Activated T-helper 1 cell treated with anti-CD3 and anti-CD28 coated beads, Interleukin-12 subunit alpha, Interleukin-12 subunit beta, Interleukin-2, Interleukin-4 antibody, amounts not matched to agents 30 ng/mL and 10 ng/mL and 1 ng/mL, durations not matched to agents 14 hours and 24 hours and 36 hours (primary cell): ENCODE measurements at regions of chr2 and their contacts with region 1.

Region 1: DNA sequence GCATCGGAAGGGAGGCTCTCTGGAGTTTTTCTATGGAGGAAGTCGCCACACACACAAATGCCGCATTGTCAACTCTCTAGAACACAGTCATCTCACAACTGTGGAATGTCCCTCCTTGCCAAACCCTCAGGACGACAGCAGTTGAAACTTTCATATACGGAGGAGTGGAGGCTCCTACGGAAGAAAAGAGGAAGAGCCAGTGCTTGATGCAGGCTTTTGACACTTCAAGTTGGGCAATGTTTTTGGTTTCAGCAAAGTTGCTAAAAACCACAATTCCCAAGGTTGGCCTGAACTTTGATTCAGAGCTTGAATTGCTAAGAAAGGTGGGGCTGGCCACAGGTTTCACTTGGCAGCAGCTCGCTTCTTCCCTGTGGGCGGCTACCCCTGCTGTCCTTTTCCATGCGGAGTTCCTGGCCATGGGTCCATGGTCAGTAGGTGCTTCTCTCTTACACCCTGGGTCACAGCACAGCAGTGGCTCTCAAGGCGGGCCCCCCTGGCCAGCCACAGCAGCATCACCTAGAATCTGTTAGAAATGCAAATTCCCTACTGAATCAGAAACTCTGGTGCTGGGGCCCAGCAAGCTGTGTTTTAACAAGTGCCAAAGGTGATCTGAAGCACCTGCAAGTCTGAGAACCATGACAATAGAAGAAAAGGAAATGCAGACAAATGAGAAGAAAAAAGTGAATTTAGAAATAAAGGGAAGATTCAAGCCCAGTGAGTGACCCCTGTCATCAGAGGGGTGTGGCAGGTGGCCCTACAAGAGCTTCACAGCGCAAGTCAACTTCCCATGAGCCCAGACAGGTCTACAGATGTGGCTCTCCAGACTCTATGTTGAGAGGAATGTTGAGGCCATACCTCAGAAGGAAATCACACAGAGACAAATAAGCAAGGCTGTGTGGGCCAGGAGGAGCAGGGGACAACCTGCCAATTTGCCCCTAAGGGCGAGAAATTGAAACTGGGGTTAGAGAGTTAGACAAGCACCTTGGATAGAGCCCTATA is 856.4 kb downstream of the RNF144A start:
- DNase-seq: peak; percentile 39
- H3K4me3 Mint-ChIP-seq: peak overlapping the region; percentile 28
- H3K27ac Mint-ChIP-seq: peak overlapping the region; percentile 91
- H3K4me1 Mint-ChIP-seq: peaks cover 41% of the 10 kb centered on the region
- H3K27me3 Mint-ChIP-seq: no peaks in the 10 kb centered on the region

Region 2: DNA sequence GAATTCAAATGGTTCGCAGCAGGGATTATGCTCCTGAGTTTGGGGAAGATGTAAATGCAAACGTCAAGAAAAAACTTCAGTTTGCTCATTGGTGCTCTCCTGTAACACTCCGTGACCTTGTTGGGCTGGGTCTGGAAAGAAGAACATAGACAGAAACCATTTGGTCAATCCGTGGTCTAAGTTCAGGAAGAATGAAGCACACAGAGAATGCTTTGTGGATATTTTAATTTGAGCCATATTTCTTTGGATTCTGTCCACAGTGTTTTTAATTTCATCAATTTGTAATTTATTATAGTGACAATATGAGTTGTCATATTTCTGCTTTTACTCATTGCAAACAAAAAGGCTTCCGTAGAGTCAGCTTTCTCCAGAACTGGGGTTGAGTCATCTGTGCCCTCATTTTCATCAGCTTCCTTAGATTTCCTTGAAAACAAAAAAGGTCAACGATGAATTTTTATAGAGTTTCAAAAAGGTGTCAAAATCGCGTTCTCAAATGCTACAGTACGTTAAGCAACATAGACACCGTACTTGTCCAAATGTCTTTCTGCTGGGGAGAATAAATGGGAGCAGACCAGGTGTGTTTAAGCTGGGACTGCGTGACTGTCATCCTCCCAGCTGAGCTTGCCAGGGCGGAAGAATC is 250.1 kb before region 1 on chr2:
- intact Hi-C with region 1: loop called (anchors 2 kb)
- DNase-seq: no peak
- H3K4me3 Mint-ChIP-seq: peak overlapping the region; percentile 2
- H3K27ac Mint-ChIP-seq: peak overlapping the region; percentile 90
- H3K4me1 Mint-ChIP-seq: peaks cover 77% of the 10 kb centered on the region
- H3K27me3 Mint-ChIP-seq: no peaks in the 10 kb centered on the region

Region 3: GRCh38 chr2:7692657-7693161 is 81.0 kb before region 1 on chr2:
- intact Hi-C with region 1: loop called (anchors 1 kb)
- DNase-seq: no peak
- H3K4me3 Mint-ChIP-seq: peak overlapping the region; percentile 48
- H3K27ac Mint-ChIP-seq: peak overlapping the region; percentile 94
- H3K4me1 Mint-ChIP-seq: peaks cover 51% of the 10 kb centered on the region
- H3K27me3 Mint-ChIP-seq: no peaks in the 10 kb centered on the region

Region 4: DNA sequence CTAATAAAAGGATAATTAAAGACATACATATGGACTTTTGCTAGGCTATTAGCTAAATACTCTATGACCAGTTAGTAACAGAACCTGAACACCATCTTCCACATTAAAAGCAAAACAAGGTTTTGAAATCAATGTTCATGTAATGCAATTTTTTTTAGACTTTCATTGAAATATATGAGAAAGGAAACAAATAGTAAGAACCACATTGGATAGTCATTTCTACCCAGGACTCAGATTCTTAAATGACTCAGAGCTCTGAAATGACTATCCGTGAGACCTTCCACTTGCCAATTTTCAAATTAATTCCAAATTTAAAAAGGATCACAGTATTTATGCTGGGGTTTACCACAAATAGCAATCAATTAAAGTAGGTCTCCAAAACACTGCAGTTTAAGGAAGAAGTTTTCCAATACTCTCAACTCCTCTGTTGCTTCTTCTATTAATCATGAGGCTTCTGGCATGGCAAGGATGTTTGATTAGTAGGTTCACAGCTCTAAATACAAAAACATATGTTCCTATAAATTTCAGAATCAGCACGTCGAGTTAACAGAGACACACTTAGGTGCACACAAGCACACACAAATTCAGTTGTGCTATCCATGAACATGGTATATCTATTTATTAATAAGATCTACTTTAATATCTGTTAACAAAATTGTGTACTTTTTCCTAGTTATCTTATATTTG is 15.4 kb before region 1 on chr2:
- intact Hi-C with region 1: loop called (anchors 1 kb)
- DNase-seq: no peak
- H3K4me3 Mint-ChIP-seq: no peak overlapping the region
- H3K27ac Mint-ChIP-seq: peak overlapping the region; percentile 76
- H3K4me1 Mint-ChIP-seq: peaks cover 22% of the 10 kb centered on the region
- H3K27me3 Mint-ChIP-seq: no peaks in the 10 kb centered on the region

Region 5: GRCh38 chr2:7930800-7931635 is 157.4 kb after region 1 on chr2:
- intact Hi-C with region 1: loop called (anchors 5 kb)
- DNase-seq: no peak
- H3K4me3 Mint-ChIP-seq: no peak overlapping the region
- H3K27ac Mint-ChIP-seq: peak overlapping the region; percentile 81
- H3K4me1 Mint-ChIP-seq: peaks cover 11% of the 10 kb centered on the region
- H3K27me3 Mint-ChIP-seq: no peaks in the 10 kb centered on the region

Region 6: DNA sequence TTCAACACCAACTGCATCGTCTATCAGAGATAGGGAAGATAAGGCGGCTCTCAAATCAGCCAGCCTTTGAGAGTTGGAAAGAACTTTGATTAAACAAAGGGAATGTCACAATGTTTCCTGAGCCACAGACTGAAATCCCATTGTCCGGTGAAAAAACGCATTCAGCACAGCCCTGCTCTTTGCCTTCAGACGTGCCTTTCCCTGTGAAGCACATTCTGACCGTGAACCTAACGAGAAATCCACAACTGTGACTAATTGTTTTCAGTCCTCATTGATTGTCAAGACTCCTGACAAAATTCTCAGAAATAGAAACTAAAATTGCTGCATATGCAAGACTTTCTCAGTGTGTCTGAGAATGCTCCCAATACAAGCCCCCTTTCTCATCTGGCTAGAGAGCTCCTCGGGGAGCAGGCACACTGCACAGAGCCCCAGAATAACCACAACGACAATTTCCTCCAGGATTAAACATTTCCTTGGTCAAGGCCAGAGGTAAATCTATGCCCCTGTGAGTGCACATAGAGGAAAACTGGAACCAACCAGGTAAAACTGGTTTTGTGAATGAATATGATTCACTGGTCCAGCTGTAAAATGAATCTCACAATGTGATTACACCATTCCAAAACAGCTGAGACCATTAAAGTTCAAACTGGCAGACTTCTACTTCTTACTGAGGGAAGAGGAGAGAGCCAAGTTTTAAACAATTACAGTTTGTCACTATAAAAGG is 346.3 kb after region 1 on chr2:
- intact Hi-C with region 1: no loop called
- DNase-seq: no peak
- H3K4me3 Mint-ChIP-seq: peak overlapping the region; percentile 30
- H3K27ac Mint-ChIP-seq: peak overlapping the region; percentile 77
- H3K4me1 Mint-ChIP-seq: peaks cover 30% of the 10 kb centered on the region
- H3K27me3 Mint-ChIP-seq: peaks cover 4% of the 10 kb centered on the region

Region 7: GRCh38 chr2:8234757-8235374 is 461.2 kb after region 1 on chr2:
- intact Hi-C with region 1: loop called (anchors 5 kb)
- DNase-seq: no peak
- H3K4me3 Mint-ChIP-seq: no peak overlapping the region
- H3K27ac Mint-ChIP-seq: no peak overlapping the region
- H3K4me1 Mint-ChIP-seq: peaks cover 53% of the 10 kb centered on the region
- H3K27me3 Mint-ChIP-seq: peaks cover 9% of the 10 kb centered on the region

Region 8: DNA sequence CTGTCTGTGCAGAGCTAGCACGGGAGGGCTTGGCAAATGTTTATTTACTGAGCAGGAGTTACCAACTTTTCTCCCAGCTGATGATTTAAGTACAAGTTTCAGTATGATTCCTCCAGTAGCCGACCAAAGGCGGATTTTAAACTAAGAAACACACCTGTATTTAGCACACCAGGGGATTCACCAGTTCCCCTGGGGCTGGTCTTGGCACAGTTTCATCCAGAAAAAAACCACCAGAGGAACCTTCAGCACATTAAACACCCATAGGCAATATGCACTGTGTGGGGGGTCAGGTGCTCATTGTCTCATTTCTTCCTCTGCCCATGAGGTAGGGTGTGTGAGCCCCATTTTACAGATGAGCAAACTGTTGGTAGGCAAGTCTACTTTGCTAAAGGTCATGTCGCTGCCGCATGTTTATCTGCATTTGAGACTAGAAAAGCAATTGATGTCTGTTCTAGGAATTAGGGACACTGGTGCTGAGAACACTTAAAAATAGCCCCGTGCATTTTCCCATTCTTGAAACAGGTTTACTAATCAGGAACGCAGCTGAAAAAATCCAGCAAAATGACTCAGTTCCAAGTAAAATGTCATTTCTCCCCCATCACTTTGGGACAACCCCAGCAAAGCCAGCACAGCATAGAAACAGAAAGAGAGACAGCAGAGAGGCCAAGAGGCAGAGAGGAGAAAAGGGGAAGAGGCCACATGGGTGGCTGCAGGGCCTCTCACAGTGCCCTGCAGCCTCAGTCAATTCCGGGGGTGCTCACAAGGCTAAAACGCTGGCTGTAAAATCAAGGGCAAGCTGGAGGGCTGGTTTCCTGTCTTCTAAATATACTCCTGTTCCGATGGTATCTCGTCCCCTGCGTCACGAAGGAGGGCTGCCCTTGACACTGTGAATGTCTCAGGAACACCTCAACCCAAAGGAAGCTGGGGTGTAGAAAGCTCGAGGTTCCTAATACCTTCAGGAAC is 741.4 kb after region 1 on chr2:
- intact Hi-C with region 1: loop called (anchors 1 kb)
- DNase-seq: peak; percentile 58
- H3K4me3 Mint-ChIP-seq: peak overlapping the region; percentile 35
- H3K27ac Mint-ChIP-seq: peak overlapping the region; percentile 95
- H3K4me1 Mint-ChIP-seq: peaks cover 68% of the 10 kb centered on the region
- H3K27me3 Mint-ChIP-seq: no peaks in the 10 kb centered on the region